Dendritic cell treated with granulocyte-macrophage colony-stimulating factor and Interleukin-4, amounts not matched to agents 40 ng/mL and 50 ng/mL, for 4 days (primary cell): ENCODE measurements at regions of chr9 and their contacts with region 1.

Region 1: GRCh38 chr9:105064315-105065097 is 136.6 kb upstream of the ABCA1 start:
- H3K4me3 Mint-ChIP-seq: peak overlapping the region; percentile 54
- H3K27ac Mint-ChIP-seq: peak overlapping the region; percentile 92
- H3K4me1 Mint-ChIP-seq: peaks cover 67% of the 10 kb centered on the region
- H3K27me3 Mint-ChIP-seq: peaks cover 4% of the 10 kb centered on the region

Region 2: GRCh38 chr9:104694218-104694617 is 370.3 kb before region 1 on chr9 and contains the start of gene OR13D1:
- intact Hi-C with region 1: no loop called
- H3K4me3 Mint-ChIP-seq: no peak within 1 kb of the TSS
- H3K27ac Mint-ChIP-seq: no peak within 1 kb of the TSS
- H3K4me1 Mint-ChIP-seq: no peaks in the 10 kb centered on the region
- H3K27me3 Mint-ChIP-seq: no peaks in the 10 kb centered on the region

Region 3: DNA sequence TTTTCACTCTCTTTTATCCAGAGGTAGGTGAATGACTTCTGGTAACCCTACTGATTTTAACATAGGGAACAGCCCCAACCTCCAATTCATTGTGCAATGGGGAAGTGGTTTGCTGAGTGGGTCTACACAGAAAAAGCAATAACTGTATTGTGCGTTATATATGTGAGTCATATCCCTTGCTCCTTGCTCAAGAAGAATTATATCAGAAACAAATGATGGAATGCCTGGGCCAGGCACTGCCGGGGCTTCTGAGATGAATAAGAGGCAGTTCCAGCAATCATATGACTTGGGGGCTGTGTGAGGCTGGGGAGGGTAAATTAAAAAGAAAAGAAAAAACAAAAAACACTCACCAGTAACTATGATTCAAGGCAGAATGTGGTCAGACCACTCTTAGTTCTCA is 57.4 kb before region 1 on chr9:
- intact Hi-C with region 1: loop called (anchors 5 kb)
- H3K4me3 Mint-ChIP-seq: peak overlapping the region; percentile 63
- H3K27ac Mint-ChIP-seq: peak overlapping the region; percentile 88
- H3K4me1 Mint-ChIP-seq: peaks cover 43% of the 10 kb centered on the region
- H3K27me3 Mint-ChIP-seq: peaks cover 12% of the 10 kb centered on the region